K562 (cell line): ENCODE measurements at regions of chr6 and their contacts with region 1.

Region 1: DNA sequence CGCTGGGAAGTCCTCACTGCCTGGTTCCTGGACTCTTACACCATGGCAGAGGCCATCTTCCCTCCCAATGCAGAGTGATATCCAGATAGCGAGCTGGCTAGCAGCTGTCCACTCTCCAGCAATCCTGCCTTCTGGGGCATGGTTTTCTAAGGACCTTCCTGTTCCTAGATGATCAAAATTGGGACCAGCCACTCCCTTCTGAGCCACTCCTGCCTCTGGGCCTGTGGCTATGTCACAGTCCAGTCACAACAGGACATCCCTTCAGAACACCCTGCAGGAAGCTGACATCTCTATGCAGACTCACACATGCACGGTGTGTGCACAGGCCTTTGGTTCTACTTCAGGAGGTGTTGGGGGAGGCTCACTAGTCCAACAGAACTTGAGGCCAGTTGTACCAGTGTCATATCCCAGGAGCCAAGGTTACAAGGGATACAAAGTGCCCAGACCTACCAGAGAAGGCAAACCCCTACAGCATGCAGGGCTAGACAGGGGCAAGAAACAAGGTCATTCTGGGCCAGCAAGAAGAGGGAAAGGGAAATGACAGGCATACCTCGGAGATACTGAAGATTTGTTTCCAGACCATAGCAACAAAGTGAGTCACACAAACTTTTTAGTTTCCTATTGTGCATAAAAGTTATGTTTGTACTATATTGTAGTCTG is 2.7 kb upstream of the MCCD1 start:
- DNase-seq: peak in 3 of 4 experiments; percentile 45 to 62 (median 56)
- ATAC-seq: peak; percentile 38
- H3K4me3 ChIP-seq: no peak overlapping the region
- H3K27ac ChIP-seq: peak overlapping the region; percentile 66; the same call in 2 of the 3 replicates
- H3K4me1 ChIP-seq: peaks cover 10 to 20% of the 10 kb centered on the region in 2 experiments
- H3K27me3 ChIP-seq: no peaks in the 10 kb centered on the region
- CTCF ChIP-seq: no peak
- EP300 ChIP-seq: no peak
- POLR2A ChIP-seq: no peak
- RAD21 ChIP-seq: no peak

Region 2: GRCh38 chr6:31493875-31494694 is 32.0 kb before region 1 on chr6:
- CTCF ChIA-PET with region 1: no interaction called
- POLR2A ChIA-PET with region 1: interaction called, 5 read pairs
- in situ Hi-C with region 1: loop called (anchors 5 kb)
- intact Hi-C with region 1: loop called (anchors 5 kb)
- DNase-seq: peak; percentile 73 to 97 (median 80)
- ATAC-seq: peak; percentile 81
- H3K4me3 ChIP-seq: peak overlapping the region; percentile 54
- H3K27ac ChIP-seq: peak overlapping the region; percentile 69
- H3K4me1 ChIP-seq: peaks cover 42 to 53% of the 10 kb centered on the region in 2 experiments
- H3K27me3 ChIP-seq: no peaks in the 10 kb centered on the region
- CTCF ChIP-seq: peak; percentile 97 to 100 (median 99)
- EP300 ChIP-seq: peak; percentile 35; the same call in 1 of the 2 replicates
- POLR2A ChIP-seq: peak; percentile 59
- RAD21 ChIP-seq: peak; percentile 80 to 95

Region 3: DNA sequence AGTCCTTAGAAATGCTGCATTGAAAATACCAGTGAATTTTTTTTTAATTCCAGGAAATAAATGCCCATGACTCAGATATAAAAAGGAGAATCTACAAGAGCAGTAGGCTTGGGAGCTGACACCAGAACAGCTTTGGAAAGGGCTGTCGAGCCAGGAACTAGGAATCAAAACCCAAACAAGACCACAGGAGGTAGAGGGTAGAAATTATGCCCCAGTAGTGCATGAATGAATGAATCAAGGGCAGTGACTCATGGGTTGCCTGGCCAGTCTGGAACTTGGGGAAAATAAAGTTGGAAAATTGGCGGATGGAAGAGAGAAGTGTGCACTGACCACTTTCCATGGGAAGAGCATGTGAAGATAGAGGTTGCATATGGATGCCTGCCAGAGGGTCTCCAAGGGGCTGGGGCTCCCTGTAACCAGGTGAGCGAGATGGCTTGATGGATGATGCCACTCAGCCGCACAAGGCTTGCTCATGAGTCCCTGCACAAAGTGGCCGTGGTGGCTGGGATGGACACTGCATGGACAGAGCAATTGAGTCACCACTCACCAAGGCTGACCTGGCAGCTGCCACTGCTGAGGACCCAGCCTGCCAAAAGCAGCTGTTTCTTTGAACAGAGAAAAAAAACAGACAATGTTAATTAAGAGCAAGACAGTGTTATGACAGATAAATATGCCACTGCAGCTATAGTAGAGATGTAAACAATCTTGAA is 12.5 kb before region 1 on chr6:
- CTCF ChIA-PET with region 1: no interaction called
- POLR2A ChIA-PET with region 1: interaction called, 67 read pairs
- in situ Hi-C with region 1: no loop called
- intact Hi-C with region 1: no loop called
- DNase-seq: no peak
- ATAC-seq: no peak
- H3K4me3 ChIP-seq: no peak overlapping the region
- H3K27ac ChIP-seq: no peak overlapping the region
- H3K4me1 ChIP-seq: peaks cover 0 to 3% of the 10 kb centered on the region in 2 experiments; a peak in 2 of 5 replicates
- H3K27me3 ChIP-seq: peaks cover 8 to 15% of the 10 kb centered on the region in 2 experiments; a peak in 4 of 5 replicates
- CTCF ChIP-seq: no peak
- EP300 ChIP-seq: no peak
- POLR2A ChIP-seq: no peak
- RAD21 ChIP-seq: no peak

Region 4: GRCh38 chr6:31569861-31570536 is 43.9 kb after region 1 on chr6:
- CTCF ChIA-PET with region 1: no interaction called
- POLR2A ChIA-PET with region 1: no interaction called
- in situ Hi-C with region 1: no loop called
- intact Hi-C with region 1: no loop called
- DNase-seq: no peak
- ATAC-seq: no peak
- H3K4me3 ChIP-seq: no peak overlapping the region
- H3K27ac ChIP-seq: no peak overlapping the region
- H3K4me1 ChIP-seq: peaks cover 0 to 15% of the 10 kb centered on the region in 2 experiments; a peak in 2 of 5 replicates
- H3K27me3 ChIP-seq: no peaks in the 10 kb centered on the region
- CTCF ChIP-seq: no peak
- EP300 ChIP-seq: no peak
- POLR2A ChIP-seq: no peak
- RAD21 ChIP-seq: no peak

Region 5: GRCh38 chr6:31619805-31620585 is 93.9 kb after region 1 on chr6:
- CTCF ChIA-PET with region 1: no interaction called
- POLR2A ChIA-PET with region 1: no interaction called
- in situ Hi-C with region 1: no loop called
- intact Hi-C with region 1: no loop called
- DNase-seq: peak; percentile 93 to 100 (median 97)
- ATAC-seq: peak; percentile 92
- H3K4me3 ChIP-seq: peak overlapping the region; percentile 96
- H3K27ac ChIP-seq: peak overlapping the region; percentile 98
- H3K4me1 ChIP-seq: peaks cover 28 to 37% of the 10 kb centered on the region in 2 experiments
- H3K27me3 ChIP-seq: no peaks in the 10 kb centered on the region
- CTCF ChIP-seq: no peak; a peak in 1 of 6 replicates
- EP300 ChIP-seq: peak; percentile 71
- POLR2A ChIP-seq: peak; percentile 99
- RAD21 ChIP-seq: peak in 1 of 2 experiments; percentile 18; a peak in 1 of 4 replicates